Dorsolateral prefrontal cortex (tissue), 120 donors: ENCODE measurements at regions of chr6 and their contacts with region 1.

Region 1: DNA sequence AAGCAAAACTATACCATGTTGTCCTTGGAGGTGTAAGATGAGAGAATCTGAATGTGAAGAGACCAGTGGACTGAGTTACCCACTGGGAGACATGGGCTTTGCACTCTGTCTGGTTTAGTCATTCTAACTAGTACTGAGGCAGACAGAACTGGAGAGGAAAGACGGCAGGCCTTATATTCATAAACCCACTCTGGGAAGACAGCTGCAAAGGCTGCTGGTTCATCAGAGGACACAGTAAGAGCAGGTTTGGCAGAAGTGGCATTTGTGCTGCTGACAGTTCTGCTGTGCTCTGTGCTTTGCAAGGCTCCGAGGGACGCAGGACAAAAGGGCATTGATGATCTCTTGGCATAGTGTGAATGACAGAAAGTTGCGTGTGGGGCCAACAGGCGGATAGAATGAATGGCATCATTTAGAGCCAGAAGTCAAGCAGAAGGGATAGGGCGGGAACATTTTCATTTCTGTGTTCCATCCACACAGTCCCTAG is 142.3 kb upstream of the TENT5A start:
- DNase-seq: peak; percentile 43 to 93 (median 85)
- H3K4me3 ChIP-seq: peak overlapping the region in 15 of 59 donors; percentile 0 to 36 (median 18)
- H3K27ac ChIP-seq: peak overlapping the region in 9 of 59 donors; percentile 2 to 58 (median 51)
- H3K27me3 ChIP-seq: peaks cover 0 to 58% (median 0%) of the 10 kb centered on the region in 45 donors
- CTCF ChIP-seq: peak in 13 of 56 donors; percentile 16 to 40 (median 24)

Region 2: GRCh38 chr6:81759782-81760181 is 135.0 kb before region 1 on chr6:
- intact Hi-C with region 1: loop called in 1 of 2 experiments (anchors 5 kb)
- DNase-seq: no peak
- H3K4me3 ChIP-seq: no peak overlapping the region
- H3K27ac ChIP-seq: no peak overlapping the region
- H3K27me3 ChIP-seq: peaks cover 0 to 56% (median 12%) of the 10 kb centered on the region in 45 donors
- CTCF ChIP-seq: no peak

Region 3: GRCh38 chr6:82080767-82081166 is 185.9 kb after region 1 on chr6:
- intact Hi-C with region 1: loop called in 1 of 2 experiments (anchors 10 kb)
- DNase-seq: no peak
- H3K4me3 ChIP-seq: no peak overlapping the region
- H3K27ac ChIP-seq: no peak overlapping the region
- H3K27me3 ChIP-seq: no peaks in the 10 kb centered on the region
- CTCF ChIP-seq: no peak

Region 4: GRCh38 chr6:82160255-82160990 is 265.6 kb after region 1 on chr6:
- intact Hi-C with region 1: no loop called
- DNase-seq: no peak
- H3K4me3 ChIP-seq: no peak overlapping the region
- H3K27ac ChIP-seq: no peak overlapping the region
- H3K27me3 ChIP-seq: no peaks in the 10 kb centered on the region
- CTCF ChIP-seq: no peak